MCF 10A (cell line): ENCODE measurements at regions of chr15 and their contacts with region 1.

Region 1: GRCh38 chr15:42650208-42651066 is 75.0 kb downstream of the STARD9 start:
- DNase-seq: peak; percentile 88
- H3K4me3 Mint-ChIP-seq: no peak overlapping the region
- H3K27ac Mint-ChIP-seq: no peak overlapping the region
- H3K4me1 Mint-ChIP-seq: peaks cover 6% of the 10 kb centered on the region
- H3K27me3 Mint-ChIP-seq: no peaks in the 10 kb centered on the region
- CTCF ChIP-seq: peak; percentile 72

Region 2: DNA sequence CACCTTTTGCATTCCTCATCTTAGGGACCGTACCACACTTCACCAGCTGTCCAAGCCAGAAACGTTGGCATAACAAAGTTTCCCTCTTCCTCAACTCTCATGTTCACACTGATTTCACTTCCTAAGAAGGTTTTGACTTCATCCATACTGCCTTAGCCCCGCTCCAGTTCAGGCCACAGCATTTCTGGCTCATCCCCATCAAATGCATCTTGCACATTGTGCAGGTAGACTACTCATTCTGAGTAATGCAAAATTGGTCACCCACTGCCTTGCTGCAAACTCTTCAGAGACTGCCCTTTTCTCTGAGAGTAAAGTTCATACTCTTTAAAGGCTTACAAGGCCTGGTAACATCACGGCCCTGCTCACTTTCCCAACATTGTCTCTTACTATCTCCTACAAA is 1308.9 kb before region 1 on chr15:
- CTCF ChIA-PET with region 1: no interaction called
- POLR2A ChIA-PET with region 1: no interaction called
- intact Hi-C with region 1: no loop called
- DNase-seq: no peak
- H3K4me3 Mint-ChIP-seq: no peak overlapping the region
- H3K27ac Mint-ChIP-seq: peak overlapping the region; percentile 58
- H3K4me1 Mint-ChIP-seq: peaks cover 29% of the 10 kb centered on the region
- H3K27me3 Mint-ChIP-seq: no peaks in the 10 kb centered on the region
- CTCF ChIP-seq: no peak

Region 3: DNA sequence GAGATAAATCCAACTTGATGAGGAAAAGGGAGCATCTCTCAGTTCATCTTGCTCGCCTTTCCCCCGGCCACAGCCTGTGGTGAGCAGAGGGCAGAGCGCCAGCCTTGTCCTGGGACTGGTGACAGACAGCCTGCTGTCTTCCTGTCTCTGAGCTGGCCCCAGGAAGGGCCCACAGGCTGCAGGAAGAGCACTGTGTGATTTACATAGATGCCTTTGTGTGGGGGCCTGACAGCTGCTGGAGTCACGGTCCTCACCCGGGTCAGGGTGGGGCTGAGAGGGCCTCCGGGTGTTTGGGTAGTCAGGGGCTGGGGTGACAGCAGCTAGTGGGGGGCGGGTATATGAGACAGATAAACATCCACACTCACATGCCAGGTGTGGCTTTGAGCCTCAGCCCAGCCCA is 585.4 kb before region 1 on chr15:
- CTCF ChIA-PET with region 1: no interaction called
- POLR2A ChIA-PET with region 1: no interaction called
- intact Hi-C with region 1: loop called (anchors 5 kb)
- DNase-seq: no peak
- H3K4me3 Mint-ChIP-seq: no peak overlapping the region
- H3K27ac Mint-ChIP-seq: no peak overlapping the region
- H3K4me1 Mint-ChIP-seq: peaks cover 8% of the 10 kb centered on the region
- H3K27me3 Mint-ChIP-seq: no peaks in the 10 kb centered on the region
- CTCF ChIP-seq: no peak

Region 4: DNA sequence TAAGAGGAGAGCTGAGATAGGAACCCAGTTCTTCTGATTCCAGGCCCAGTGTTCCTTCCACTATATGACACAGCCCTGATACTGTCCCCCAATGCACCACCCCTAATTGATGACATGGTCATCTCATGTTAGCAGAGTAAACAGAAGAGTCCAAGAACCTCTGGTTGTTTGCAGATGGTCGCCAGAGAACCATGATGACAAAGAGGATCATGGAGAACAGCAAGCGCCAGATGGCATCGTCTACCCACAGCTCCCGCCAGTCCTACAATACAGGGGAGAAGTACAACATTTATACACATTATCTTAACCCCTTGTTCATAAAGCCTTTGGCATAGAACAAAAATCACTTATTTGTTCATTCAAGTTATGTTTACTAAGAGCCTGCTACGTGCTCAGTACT is 423.8 kb before region 1 on chr15:
- CTCF ChIA-PET with region 1: no interaction called
- POLR2A ChIA-PET with region 1: no interaction called
- intact Hi-C with region 1: loop called (anchors 10 kb)
- DNase-seq: no peak
- H3K4me3 Mint-ChIP-seq: no peak overlapping the region
- H3K27ac Mint-ChIP-seq: no peak overlapping the region
- H3K4me1 Mint-ChIP-seq: no peaks in the 10 kb centered on the region
- H3K27me3 Mint-ChIP-seq: no peaks in the 10 kb centered on the region
- CTCF ChIP-seq: no peak

Region 5: DNA sequence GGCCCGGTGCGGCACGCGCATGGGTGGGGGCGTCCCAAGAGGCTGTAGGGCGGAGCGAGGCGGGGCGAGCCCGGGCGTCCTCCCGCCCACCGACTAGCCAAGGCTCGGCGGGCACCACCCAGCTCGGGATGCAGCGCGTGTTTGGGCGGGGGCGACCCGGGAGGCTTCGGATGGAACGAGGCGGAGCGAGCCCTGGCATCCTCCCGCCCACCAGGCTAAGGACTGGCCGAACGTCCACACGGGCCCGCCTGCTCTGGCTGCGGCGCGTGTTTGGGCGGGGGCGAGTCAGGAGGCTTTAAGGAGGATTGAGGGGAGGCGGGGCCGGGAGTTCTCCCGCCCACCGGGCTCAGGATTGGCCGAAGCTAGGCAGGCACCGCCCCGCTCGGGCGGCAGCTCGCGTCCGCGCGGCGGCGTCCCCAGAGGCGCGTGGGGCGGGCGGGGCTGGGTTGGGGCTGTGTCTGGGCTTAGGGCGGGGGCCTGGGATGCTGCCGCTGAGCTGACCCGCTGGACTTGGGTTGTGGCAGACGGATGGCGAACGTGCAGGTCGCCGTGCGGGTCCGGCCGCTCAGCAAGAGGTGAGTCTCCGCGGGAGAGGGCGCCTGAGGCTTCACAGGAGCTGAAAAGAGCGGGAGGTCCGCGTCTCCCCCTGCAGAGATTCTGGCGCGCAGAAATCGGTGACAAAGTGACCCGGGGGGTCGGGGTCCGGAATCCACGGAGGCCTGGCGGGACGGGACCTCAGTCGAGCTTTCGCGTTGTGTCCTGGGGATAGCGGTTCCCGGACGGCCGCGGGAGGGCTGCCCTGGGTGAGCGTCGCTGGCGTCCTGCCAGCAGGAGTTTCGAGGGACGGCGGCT is 75.0 kb before region 1 on chr15 and contains the start of gene STARD9:
- CTCF ChIA-PET with region 1: no interaction called
- POLR2A ChIA-PET with region 1: no interaction called
- intact Hi-C with region 1: loop called (anchors 2 kb)
- DNase-seq: peak; percentile 98
- H3K4me3 Mint-ChIP-seq: peak within 1 kb of the TSS; percentile 89
- H3K27ac Mint-ChIP-seq: peak within 1 kb of the TSS; percentile 53
- H3K4me1 Mint-ChIP-seq: peaks cover 7% of the 10 kb centered on the region
- H3K27me3 Mint-ChIP-seq: no peaks in the 10 kb centered on the region
- CTCF ChIP-seq: no peak
- total RNA-seq, gene STARD9: 2.0 and 2.9 TPM in 2 replicates

Region 6: DNA sequence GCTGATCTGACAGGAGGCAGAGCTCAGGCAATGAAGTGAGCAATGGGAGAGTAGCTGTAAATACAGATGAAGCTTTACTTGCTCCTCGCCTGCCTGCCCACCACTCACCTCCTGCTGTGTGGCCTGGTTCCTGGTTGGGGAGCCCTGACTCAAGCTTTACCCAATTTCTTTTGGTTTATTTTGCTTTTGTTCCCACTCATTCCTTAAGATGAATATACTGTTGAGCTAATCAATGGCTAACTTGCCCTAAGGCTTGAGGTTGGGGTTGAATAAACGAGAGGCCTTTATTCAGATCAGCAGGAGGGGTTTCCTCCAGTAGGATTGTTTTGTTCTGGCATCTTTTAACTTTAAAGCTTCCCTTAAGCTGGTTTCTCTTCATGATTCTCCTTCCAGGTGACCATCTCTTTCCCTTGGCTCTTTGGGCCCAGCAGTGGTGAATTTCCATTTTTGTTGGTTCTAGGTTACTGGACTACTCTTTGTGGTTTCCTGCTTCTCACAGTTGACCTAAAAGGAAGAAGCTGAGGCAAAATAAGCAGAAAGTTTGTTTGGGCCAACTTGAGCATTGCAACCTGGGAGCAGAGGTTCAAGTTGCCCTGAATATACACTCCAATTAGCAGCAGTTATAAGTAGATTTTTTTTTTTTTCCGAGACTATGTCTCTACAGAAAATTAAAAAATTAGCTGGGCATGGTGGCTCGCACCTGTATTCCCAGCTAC is 30.6 kb before region 1 on chr15:
- CTCF ChIA-PET with region 1: no interaction called
- POLR2A ChIA-PET with region 1: no interaction called
- intact Hi-C with region 1: no loop called
- DNase-seq: no peak
- H3K4me3 Mint-ChIP-seq: no peak overlapping the region
- H3K27ac Mint-ChIP-seq: no peak overlapping the region
- H3K4me1 Mint-ChIP-seq: no peaks in the 10 kb centered on the region
- H3K27me3 Mint-ChIP-seq: no peaks in the 10 kb centered on the region
- CTCF ChIP-seq: no peak